Heart right ventricle (tissue), 16 donors: ENCODE measurements at regions of chr4 and their contacts with region 1.

Region 1: DNA sequence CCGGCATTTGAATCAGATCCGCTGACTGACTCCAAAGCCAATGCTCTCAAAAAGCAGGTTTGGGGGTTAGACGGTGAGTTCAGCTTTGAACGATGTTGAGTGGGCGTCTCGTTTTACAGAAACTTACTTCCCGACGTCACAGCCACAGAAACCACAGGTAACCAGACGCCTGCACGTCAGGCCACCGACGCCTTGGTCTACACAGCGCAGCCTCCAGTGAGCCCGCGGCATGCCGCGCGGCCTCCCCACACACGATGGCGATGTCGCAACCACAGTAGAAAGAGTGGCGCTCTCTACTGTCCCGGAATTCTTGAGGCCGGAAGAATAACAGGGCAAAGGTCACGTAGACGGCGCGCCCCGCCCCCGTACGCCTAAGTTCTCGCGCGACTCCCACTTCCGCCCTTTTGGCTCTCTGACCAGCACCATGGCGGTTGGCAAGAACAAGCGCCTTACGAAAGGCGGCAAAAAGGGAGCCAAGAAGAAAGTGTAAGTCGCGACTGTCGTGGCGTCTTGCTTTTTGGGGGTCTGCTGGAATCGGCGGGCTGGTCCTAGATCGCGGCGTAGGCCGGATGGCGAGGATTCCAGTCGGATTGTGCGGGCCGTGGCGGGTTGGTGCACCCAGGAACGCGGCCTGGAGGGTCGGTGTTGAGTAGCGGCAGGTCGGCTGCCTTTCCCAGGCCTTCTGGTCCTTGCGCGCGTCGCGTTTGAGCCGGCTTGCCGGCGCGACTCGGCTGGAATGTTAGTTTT is at the start of gene RPS3A:
- DNase-seq: peak; percentile 96 to 97
- ATAC-seq: peak; percentile 96 to 99 (median 98)
- H3K4me3 ChIP-seq: peak within 1 kb of the TSS; percentile 59 to 95 (median 80)
- H3K27ac ChIP-seq: peak within 1 kb of the TSS; percentile 36 to 91 (median 88)
- H3K4me1 ChIP-seq: peaks cover 0 to 40% (median 24%) of the 10 kb centered on the region in 9 donors
- H3K27me3 ChIP-seq: no peaks in the 10 kb centered on the region
- CTCF ChIP-seq: peak; percentile 66 to 98 (median 82)
- total RNA-seq, gene RPS3A: 716 to 1,104 (median 881) TPM

Region 2: GRCh38 chr4:151015459-151016347 is 83.7 kb before region 1 on chr4:
- intact Hi-C with region 1: loop called in 1 of 10 experiments (anchors 5 kb)
- DNase-seq: peak; percentile 59 to 79
- ATAC-seq: peak; percentile 82 to 97 (median 93)
- H3K4me3 ChIP-seq: peak overlapping the region; percentile 85 to 100 (median 100)
- H3K27ac ChIP-seq: peak overlapping the region; percentile 64 to 95 (median 92)
- H3K4me1 ChIP-seq: peaks cover 0 to 34% (median 24%) of the 10 kb centered on the region in 9 donors
- H3K27me3 ChIP-seq: no peaks in the 10 kb centered on the region
- CTCF ChIP-seq: no peak

Region 3: GRCh38 chr4:151760712-151761527 is 661.5 kb after region 1 on chr4 and contains the start of gene GATB:
- intact Hi-C with region 1: loop called in 1 of 10 experiments (anchors 2 kb)
- DNase-seq: peak; percentile 85 to 95
- ATAC-seq: peak; percentile 99 to 100 (median 100)
- H3K4me3 ChIP-seq: peak within 1 kb of the TSS; percentile 73 to 92 (median 83)
- H3K27ac ChIP-seq: peak within 1 kb of the TSS; percentile 62 to 82 (median 76)
- H3K4me1 ChIP-seq: peaks cover 0 to 24% (median 12%) of the 10 kb centered on the region in 9 donors
- H3K27me3 ChIP-seq: peaks cover 0 to 4% (median 0%) of the 10 kb centered on the region in 7 donors
- CTCF ChIP-seq: peak; percentile 38 to 70 (median 58)
- total RNA-seq, gene GATB: 79.0 to 122 (median 88.5) TPM

Region 4: DNA sequence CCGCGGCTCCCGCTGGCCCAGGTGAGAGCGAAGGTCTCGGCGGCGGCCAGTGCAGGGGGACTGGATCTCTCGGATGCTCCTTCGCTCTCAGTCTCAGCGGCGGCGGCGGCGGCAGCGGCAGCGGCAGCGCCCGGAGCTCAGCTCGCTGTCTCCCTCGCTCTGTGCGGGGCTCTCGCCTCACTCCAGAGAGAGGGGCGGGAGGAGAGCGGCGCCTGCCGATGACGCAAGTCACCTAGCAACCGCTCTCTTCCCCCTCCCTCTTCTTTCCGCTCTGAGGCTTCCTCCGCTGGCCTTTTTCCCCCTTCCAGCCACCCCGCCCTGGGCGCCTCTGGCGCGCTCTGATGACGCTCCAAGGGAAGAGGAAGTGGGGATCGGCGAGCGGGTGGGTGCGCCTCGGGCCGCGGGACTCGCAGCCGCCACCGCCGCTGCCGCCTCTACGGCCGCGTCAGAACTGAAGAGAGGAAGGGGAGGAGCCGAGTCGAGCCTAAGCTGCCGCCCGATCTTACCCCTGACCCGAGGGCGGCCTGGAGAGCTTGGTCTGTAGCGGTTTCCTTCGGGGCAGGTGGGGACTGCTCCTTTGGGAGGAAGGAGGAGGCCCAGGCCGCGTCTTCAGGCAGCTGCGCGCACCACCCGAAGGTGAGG is 1436.6 kb after region 1 on chr4 and contains the start of gene FBXW7:
- intact Hi-C with region 1: loop called in 1 of 10 experiments (anchors 10 kb)
- DNase-seq: peak; percentile 99
- ATAC-seq: peak; percentile 95 to 99 (median 98)
- H3K4me3 ChIP-seq: peak within 1 kb of the TSS; percentile 89 to 100 (median 98)
- H3K27ac ChIP-seq: peak within 1 kb of the TSS; percentile 42 to 98 (median 92)
- H3K4me1 ChIP-seq: peaks cover 0 to 63% (median 53%) of the 10 kb centered on the region in 9 donors
- H3K27me3 ChIP-seq: no peaks in the 10 kb centered on the region
- CTCF ChIP-seq: no peak
- total RNA-seq, gene FBXW7: 59.5 to 87.6 (median 71.7) TPM